ENCODE measurements at regions of chr10 and their contacts with region 1.

Region 1: DNA sequence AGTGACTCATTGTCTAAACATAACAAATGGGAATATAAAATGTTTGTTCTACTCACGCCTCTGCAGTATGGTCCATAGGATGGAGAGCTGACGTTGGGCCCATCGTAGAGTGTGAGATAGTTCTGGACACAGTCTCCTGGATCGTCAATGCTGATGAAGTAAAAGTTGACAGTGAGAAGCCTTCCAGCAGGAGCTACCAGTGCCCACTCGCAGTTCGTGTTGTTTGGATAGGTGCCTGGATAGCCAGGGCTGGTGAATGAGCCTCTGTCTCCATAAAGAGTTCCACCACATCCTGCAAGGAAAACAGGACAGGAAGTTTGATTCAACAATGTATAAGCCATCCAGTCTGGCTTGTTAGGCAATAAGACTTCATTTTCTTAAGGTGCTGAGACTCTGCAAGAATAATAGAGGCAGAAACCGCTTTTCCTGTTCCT is 79.6 kb downstream of the OR13A1 start:
- DNase-seq: no peak
- H3K4me3 ChIP-seq: no peak overlapping the region
- H3K4me3 Mint-ChIP-seq: no peak overlapping the region
- H3K27ac ChIP-seq: no peak overlapping the region
- H3K27ac Mint-ChIP-seq: no peak overlapping the region
- H3K4me1 ChIP-seq: no peaks in the 10 kb centered on the region
- H3K4me1 Mint-ChIP-seq: no peaks in the 10 kb centered on the region
- H3K27me3 ChIP-seq: no peaks in the 10 kb centered on the region
- H3K27me3 Mint-ChIP-seq: peaks cover 9 to 13% of the 10 kb centered on the region in 2 donors

Region 2: GRCh38 chr10:45008524-45009161 is 227.2 kb before region 1 on chr10:
- CTCF ChIA-PET with region 1: no interaction called
- POLR2A ChIA-PET with region 1: no interaction called
- intact Hi-C with region 1: loop called (anchors 10 kb)
- DNase-seq: peak; percentile 43 to 66 (median 60)
- H3K4me3 ChIP-seq: no peak overlapping the region
- H3K4me3 Mint-ChIP-seq: no peak overlapping the region
- H3K27ac ChIP-seq: no peak overlapping the region
- H3K27ac Mint-ChIP-seq: no peak overlapping the region
- H3K4me1 ChIP-seq: no peaks in the 10 kb centered on the region
- H3K4me1 Mint-ChIP-seq: peaks cover 2 to 6% (median 5%) of the 10 kb centered on the region in 4 donors
- H3K27me3 ChIP-seq: no peaks in the 10 kb centered on the region
- H3K27me3 Mint-ChIP-seq: peaks cover 0 to 3% of the 10 kb centered on the region in 2 donors

Region 3: GRCh38 chr10:45209888-45210287 is 25.9 kb before region 1 on chr10:
- CTCF ChIA-PET with region 1: no interaction called
- POLR2A ChIA-PET with region 1: no interaction called
- intact Hi-C with region 1: no loop called
- DNase-seq: no peak
- H3K4me3 ChIP-seq: no peak overlapping the region
- H3K4me3 Mint-ChIP-seq: no peak overlapping the region
- H3K27ac ChIP-seq: no peak overlapping the region
- H3K27ac Mint-ChIP-seq: no peak overlapping the region
- H3K4me1 ChIP-seq: no peaks in the 10 kb centered on the region
- H3K4me1 Mint-ChIP-seq: no peaks in the 10 kb centered on the region
- H3K27me3 ChIP-seq: no peaks in the 10 kb centered on the region
- H3K27me3 Mint-ChIP-seq: peaks cover 11 to 14% of the 10 kb centered on the region in 2 donors

Region 4: DNA sequence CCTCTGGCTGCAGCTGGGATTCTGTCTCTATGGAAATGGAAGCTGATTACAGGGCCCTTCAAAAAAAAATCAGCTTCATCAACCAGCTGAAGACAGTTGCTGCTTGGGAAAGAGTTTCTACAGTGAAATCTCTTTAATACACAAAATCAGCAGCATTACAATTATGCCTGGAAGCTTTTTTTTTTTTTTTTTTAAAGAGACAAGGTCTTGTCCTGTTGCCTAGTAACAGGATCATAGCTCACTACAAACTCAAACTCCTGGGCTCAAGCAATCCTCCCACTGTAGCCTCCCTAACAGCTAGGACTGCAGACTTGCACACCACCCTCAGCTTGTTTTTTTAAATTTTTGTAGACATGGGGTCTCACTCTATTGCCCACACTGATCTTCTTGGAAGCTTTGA is 14.9 kb before region 1 on chr10:
- CTCF ChIA-PET with region 1: interaction called, 12 read pairs
- POLR2A ChIA-PET with region 1: no interaction called
- intact Hi-C with region 1: no loop called
- DNase-seq: no peak
- H3K4me3 ChIP-seq: no peak overlapping the region
- H3K4me3 Mint-ChIP-seq: no peak overlapping the region
- H3K27ac ChIP-seq: no peak overlapping the region
- H3K27ac Mint-ChIP-seq: no peak overlapping the region
- H3K4me1 ChIP-seq: no peaks in the 10 kb centered on the region
- H3K4me1 Mint-ChIP-seq: no peaks in the 10 kb centered on the region
- H3K27me3 ChIP-seq: no peaks in the 10 kb centered on the region
- H3K27me3 Mint-ChIP-seq: peaks cover 0 to 1% of the 10 kb centered on the region in 2 donors